ENCODE measurements at regions of chr3 and their contacts with region 1.

Region 1: GRCh38 chr3:69236812-69237707 is 114.7 kb upstream of the LMOD3 start:
- DNase-seq: no peak
- H3K4me3 Mint-ChIP-seq: peak overlapping the region; percentile 71
- H3K27ac Mint-ChIP-seq: peak overlapping the region; percentile 9
- H3K4me1 Mint-ChIP-seq: peaks cover 18% of the 10 kb centered on the region
- H3K27me3 Mint-ChIP-seq: no peaks in the 10 kb centered on the region

Region 2: DNA sequence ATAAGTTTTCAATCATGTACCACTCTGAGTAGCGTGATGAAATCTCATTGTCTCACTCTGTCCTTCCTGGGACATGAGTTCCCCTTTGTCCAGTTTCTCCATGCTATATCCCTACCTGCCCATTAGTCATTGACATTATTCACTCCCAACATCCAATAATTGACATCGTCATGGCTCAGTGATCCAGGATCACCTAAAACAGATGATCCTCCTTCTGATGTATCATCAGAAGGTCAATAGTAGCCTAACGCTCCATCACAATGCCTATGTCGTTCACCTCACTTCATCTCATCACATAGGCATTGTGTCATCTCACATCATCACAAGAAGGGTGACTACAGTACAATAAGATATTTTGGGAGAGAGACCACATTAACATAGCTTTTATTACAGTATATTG is 645.7 kb before region 1 on chr3:
- intact Hi-C with region 1: no loop called
- DNase-seq: no peak
- H3K4me3 Mint-ChIP-seq: no peak overlapping the region
- H3K27ac Mint-ChIP-seq: no peak overlapping the region
- H3K4me1 Mint-ChIP-seq: no peaks in the 10 kb centered on the region
- H3K27me3 Mint-ChIP-seq: no peaks in the 10 kb centered on the region

Region 3: GRCh38 chr3:69282181-69282580 is 45.1 kb after region 1 on chr3:
- intact Hi-C with region 1: loop called (anchors 5 kb)
- DNase-seq: no peak
- H3K4me3 Mint-ChIP-seq: peak overlapping the region; percentile 37
- H3K27ac Mint-ChIP-seq: peak overlapping the region; percentile 81
- H3K4me1 Mint-ChIP-seq: peaks cover 24% of the 10 kb centered on the region
- H3K27me3 Mint-ChIP-seq: no peaks in the 10 kb centered on the region